PC-9 (cell line): ENCODE measurements at regions of chr22 and their contacts with region 1.

Region 1: DNA sequence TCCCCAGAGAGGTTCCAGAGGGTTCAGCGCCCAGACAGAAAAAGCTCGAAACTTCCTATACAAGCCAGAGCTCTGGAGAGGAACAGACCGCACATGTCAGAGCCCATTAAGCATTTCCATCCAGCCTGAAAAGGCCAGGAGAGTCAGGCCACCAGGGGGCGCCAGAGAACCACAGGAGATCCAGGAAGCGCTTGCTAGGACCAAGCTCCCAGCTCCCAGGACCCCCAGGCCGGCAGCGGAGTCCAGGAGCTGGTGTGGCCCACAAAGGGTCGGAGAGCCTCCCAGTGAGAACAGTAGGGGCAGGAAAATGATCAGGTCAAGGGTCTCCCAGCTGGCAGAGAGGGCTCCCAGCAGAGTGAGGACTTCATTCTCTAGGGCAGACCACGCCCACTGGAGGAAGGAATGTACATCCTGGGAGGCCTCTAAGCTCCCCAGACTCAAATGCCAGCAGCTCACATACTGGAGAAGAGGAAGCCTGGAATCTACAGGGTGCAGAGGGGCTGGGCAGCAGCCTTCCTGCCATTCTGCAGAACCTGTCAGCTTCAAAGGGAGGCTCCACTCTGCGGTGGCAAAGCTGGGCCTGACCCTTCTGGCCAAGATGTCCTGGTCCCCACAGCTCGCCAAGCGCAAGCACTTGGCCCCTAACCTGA is 2.1 kb upstream of the MEI1 start:
- DNase-seq: peak; percentile 70 to 92
- H3K4me3 ChIP-seq: peak overlapping the region; percentile 43; the same call in 1 of the 2 replicates
- H3K27ac ChIP-seq: no peak overlapping the region
- H3K4me1 ChIP-seq: peaks cover 6% of the 10 kb centered on the region; the same call in 1 of the 2 replicates
- H3K27me3 ChIP-seq: no peaks in the 10 kb centered on the region
- CTCF ChIP-seq: peak; percentile 100

Region 2: GRCh38 chr22:41666661-41667258 is 30.5 kb before region 1 on chr22:
- CTCF ChIA-PET with region 1: interaction called, 24 read pairs
- POLR2A ChIA-PET with region 1: interaction called, 3 read pairs
- intact Hi-C with region 1: loop called (anchors 2 kb)
- DNase-seq: peak; percentile 87 to 96
- H3K4me3 ChIP-seq: peak overlapping the region; percentile 51
- H3K27ac ChIP-seq: peak overlapping the region; percentile 91
- H3K4me1 ChIP-seq: peaks cover 51% of the 10 kb centered on the region
- H3K27me3 ChIP-seq: no peaks in the 10 kb centered on the region
- CTCF ChIP-seq: peak; percentile 99

Region 3: DNA sequence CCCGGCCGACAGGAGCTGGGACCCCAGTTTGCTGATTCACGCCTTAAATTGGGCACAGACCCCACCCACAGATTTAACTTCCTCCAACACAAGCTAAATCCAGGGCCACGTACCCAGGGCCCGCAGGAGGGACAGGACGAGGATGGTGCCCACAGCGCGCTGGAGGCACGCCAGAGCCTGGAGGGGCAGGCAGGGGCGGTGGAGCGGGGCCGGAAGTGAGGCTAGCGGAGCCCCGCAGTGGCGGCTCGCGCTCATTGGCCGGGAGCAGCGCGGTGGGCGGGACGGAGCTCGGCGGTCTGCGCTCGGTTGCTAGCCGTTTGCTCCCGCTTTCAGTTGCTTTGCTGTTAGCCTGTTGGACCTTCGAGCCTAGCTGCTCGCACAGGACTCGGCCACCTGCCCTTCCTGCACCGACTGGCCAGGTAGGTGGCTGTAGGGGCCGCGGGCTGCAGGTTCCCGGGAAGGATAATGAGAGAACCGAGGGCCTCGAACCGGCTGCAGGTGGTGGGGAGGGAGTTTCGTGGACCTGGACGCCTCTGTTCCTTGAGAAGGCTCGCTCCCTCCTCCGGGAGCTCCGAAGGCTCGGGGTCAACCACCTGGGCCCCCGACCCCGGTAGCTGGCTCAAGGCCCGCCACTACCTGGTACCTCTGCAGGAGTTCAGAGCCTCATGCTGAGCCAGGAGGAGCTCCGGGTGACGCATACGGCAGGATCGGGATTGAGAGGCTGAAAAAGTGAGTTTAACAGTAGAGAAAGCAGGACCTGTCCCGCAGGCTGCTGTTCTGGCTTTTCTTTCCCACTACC is 103.3 kb after region 1 on chr22 and contains the start of gene CCDC134:
- CTCF ChIA-PET with region 1: interaction called, 19 read pairs
- POLR2A ChIA-PET with region 1: interaction called, 13 read pairs
- intact Hi-C with region 1: loop called (anchors 1 kb)
- DNase-seq: peak; percentile 78 to 96
- H3K4me3 ChIP-seq: peak within 1 kb of the TSS; percentile 71
- H3K27ac ChIP-seq: peak within 1 kb of the TSS; percentile 46
- H3K4me1 ChIP-seq: peaks cover 27% of the 10 kb centered on the region
- H3K27me3 ChIP-seq: no peaks in the 10 kb centered on the region
- CTCF ChIP-seq: no peak
- total RNA-seq, gene CCDC134: 29.0 and 33.3 TPM in 2 replicates

Region 4: GRCh38 chr22:41841085-41841659 is 143.9 kb after region 1 on chr22:
- CTCF ChIA-PET with region 1: no interaction called
- POLR2A ChIA-PET with region 1: interaction called, 17 read pairs
- intact Hi-C with region 1: no loop called
- DNase-seq: peak in 1 of 2 experiments; percentile 84
- H3K4me3 ChIP-seq: peak overlapping the region; percentile 25
- H3K27ac ChIP-seq: peak overlapping the region; percentile 80
- H3K4me1 ChIP-seq: peaks cover 84% of the 10 kb centered on the region
- H3K27me3 ChIP-seq: no peaks in the 10 kb centered on the region
- CTCF ChIP-seq: no peak

Region 5: DNA sequence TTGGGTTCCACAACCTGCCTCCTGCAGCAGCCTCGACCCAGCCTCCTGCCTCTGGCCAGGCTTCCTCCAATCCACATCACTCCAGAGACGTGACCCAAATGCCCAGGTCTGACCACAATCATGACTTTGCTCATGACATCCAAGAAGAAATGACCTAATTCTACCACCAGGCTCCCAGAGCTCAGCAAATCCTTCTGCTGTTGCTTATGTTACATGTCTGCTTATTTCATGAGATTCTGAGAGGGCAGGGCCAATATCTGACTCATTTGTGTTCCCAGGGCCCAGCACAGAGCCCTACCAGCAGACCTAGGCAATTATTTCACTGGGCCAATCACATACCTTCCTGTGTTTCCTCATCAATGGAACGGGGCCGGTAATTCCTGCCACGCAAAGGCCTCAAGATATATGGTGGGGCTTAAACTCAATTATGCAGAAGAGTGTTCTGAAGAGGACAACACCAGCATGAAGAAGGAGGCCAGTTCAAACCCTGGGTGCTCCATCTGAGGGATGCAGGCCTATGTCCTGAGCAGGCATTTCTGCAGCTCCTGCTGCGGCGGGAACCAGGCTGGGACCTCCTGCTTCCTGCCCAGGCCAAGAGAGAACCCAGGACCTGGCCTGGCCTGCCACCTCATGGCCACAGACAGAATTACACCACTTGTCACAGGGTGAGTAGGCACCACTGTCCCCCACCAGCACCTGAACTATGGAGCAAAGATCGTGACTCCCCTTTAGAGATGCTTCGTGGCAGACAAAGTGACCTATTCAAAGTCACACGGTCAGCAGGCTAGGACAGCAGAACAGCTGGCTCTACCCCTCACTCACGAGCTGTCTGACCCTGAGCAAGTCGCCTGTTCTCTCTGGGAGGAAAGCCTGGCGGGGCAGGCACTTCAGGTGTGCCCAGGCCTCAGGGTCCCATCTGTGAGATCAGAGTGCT is 243.8 kb after region 1 on chr22:
- CTCF ChIA-PET with region 1: interaction called, 26 read pairs
- POLR2A ChIA-PET with region 1: no interaction called
- intact Hi-C with region 1: loop called (anchors 1 kb)
- DNase-seq: peak; percentile 63 to 84
- H3K4me3 ChIP-seq: no peak overlapping the region
- H3K27ac ChIP-seq: peak overlapping the region; percentile 58
- H3K4me1 ChIP-seq: peaks cover 11% of the 10 kb centered on the region
- H3K27me3 ChIP-seq: no peaks in the 10 kb centered on the region
- CTCF ChIP-seq: peak; percentile 98

Region 6: GRCh38 chr22:42016101-42016500 is 318.9 kb after region 1 on chr22:
- CTCF ChIA-PET with region 1: no interaction called
- POLR2A ChIA-PET with region 1: no interaction called
- intact Hi-C with region 1: no loop called
- DNase-seq: peak in 1 of 2 experiments; percentile 43
- H3K4me3 ChIP-seq: no peak overlapping the region
- H3K27ac ChIP-seq: no peak overlapping the region
- H3K4me1 ChIP-seq: peaks cover 4% of the 10 kb centered on the region; the same call in 1 of the 2 replicates
- H3K27me3 ChIP-seq: no peaks in the 10 kb centered on the region
- CTCF ChIP-seq: no peak

Region 7: GRCh38 chr22:42114721-42115120 is 417.5 kb after region 1 on chr22:
- CTCF ChIA-PET with region 1: no interaction called
- POLR2A ChIA-PET with region 1: no interaction called
- intact Hi-C with region 1: no loop called
- DNase-seq: no peak
- H3K4me3 ChIP-seq: no peak overlapping the region
- H3K27ac ChIP-seq: no peak overlapping the region
- H3K4me1 ChIP-seq: no peaks in the 10 kb centered on the region
- H3K27me3 ChIP-seq: no peaks in the 10 kb centered on the region; the same call in 1 of the 2 replicates
- CTCF ChIP-seq: peak; percentile 57